ENCODE measurements at regions of chr2 and their contacts with region 1.

Region 1: DNA sequence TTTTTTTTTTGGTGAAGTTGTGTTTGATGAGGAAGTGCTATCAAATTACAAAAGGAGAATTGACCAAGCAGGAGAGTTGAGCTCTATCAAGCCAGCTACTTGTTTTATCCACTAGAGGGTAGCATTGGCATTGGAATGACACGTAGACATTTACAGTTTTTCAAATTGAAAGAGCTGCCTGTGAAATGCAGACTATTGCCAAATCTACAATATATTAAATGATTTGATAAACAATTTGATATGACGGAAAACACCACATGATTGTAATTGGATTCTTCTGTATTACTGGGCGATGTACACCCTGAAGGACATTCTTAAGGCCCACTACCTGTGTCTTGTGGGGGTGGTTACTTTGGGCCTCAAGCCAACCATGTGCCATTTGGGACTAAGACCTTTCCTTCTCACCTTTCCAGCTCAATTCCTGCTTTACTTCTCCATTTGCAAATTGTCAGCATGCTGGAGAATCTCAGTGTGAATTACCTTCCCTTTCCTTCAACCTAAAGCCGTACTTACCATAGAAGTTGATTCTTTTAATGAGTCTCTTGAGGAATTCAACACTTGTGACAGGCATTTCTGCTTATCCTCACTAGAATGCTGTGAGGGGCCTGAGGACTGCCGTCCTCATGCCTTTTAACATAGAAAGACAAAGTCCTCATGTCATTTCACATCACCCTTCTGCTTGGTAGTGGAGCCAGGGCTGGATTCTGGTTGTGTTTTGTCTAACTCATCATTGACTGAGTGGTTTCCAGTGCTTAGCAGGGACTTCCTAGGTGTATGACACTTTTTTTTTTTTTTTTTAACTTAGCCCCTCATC is 134.8 kb upstream of the THUMPD2 start:
- DNase-seq: peak; percentile 37 to 57 (median 54)
- ATAC-seq: peak; percentile 82
- H3K4me3 ChIP-seq: no peak overlapping the region
- H3K27ac ChIP-seq: no peak overlapping the region
- H3K4me1 ChIP-seq: no peaks in the 10 kb centered on the region
- H3K27me3 ChIP-seq: no peaks in the 10 kb centered on the region
- CTCF ChIP-seq: peak; percentile 42 to 78 (median 68); a peak in 5 of 6 replicates
- EP300 ChIP-seq: no peak
- POLR2A ChIP-seq: no peak
- RAD21 ChIP-seq: peak; percentile 91 to 95

Region 2: DNA sequence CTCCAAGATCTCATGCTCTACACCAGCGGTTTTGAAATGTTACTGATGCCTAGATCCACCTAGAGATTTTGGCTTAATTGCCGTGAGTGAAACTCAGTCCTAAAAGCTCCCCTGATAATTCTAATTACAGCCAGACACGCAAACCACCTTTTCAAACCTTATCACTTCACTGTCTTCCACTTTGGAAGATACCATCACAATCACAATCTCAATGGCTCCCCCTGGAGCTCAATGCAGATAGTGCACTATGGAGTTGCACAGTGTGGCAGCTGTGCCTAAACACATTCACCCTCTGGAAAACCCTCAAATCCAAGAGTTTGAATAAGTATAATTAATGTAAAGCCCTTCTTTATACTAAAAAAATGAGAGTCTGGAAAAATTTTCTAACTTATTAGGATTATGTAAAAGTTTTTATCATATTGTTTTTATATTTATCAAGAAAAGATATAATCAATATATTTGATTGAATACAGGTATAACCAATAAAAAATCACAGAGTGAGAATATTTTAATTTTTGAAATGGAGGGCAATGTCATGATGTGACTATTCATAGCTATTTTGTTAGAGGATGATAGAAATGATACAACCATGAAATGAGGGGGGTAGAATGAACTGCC is 640.9 kb after region 1 on chr2:
- CTCF ChIA-PET with region 1: no interaction called
- POLR2A ChIA-PET with region 1: no interaction called
- in situ Hi-C with region 1: no loop called
- intact Hi-C with region 1: loop called (anchors 2 kb)
- DNase-seq: peak; percentile 3 to 27 (median 20)
- ATAC-seq: 0 out of 3 replicates have a peak, but pooled peaks have one; percentile 49
- H3K4me3 ChIP-seq: no peak overlapping the region
- H3K27ac ChIP-seq: no peak overlapping the region
- H3K4me1 ChIP-seq: no peaks in the 10 kb centered on the region
- H3K27me3 ChIP-seq: no peaks in the 10 kb centered on the region
- CTCF ChIP-seq: peak in 2 of 3 experiments; percentile 18 to 45; a peak in 1 of 6 replicates
- EP300 ChIP-seq: no peak
- POLR2A ChIP-seq: no peak
- RAD21 ChIP-seq: peak; percentile 50 to 53

Region 3: GRCh38 chr2:41698678-41699422 is 1785.0 kb after region 1 on chr2:
- CTCF ChIA-PET with region 1: interaction called, 3 read pairs
- POLR2A ChIA-PET with region 1: no interaction called
- in situ Hi-C with region 1: no loop called
- intact Hi-C with region 1: loop called (anchors 2 kb)
- DNase-seq: peak; percentile 26 to 45 (median 34)
- ATAC-seq: peak; percentile 75
- H3K4me3 ChIP-seq: no peak overlapping the region
- H3K27ac ChIP-seq: no peak overlapping the region
- H3K4me1 ChIP-seq: no peaks in the 10 kb centered on the region; a peak in 1 of 5 replicates
- H3K27me3 ChIP-seq: no peaks in the 10 kb centered on the region
- CTCF ChIP-seq: peak; percentile 47 to 68 (median 56); a peak in 5 of 6 replicates
- EP300 ChIP-seq: no peak
- POLR2A ChIP-seq: no peak
- RAD21 ChIP-seq: peak; percentile 52 to 73

Measured in K562 (cell line).